ENCODE measurements at regions of chrX and their contacts with region 1.

Region 1: GRCh38 chrX:41759817-41760216 is 35.8 kb downstream of the GPR82 start:
- DNase-seq: no peak
- H3K4me3 ChIP-seq: no peak overlapping the region
- H3K27ac ChIP-seq: no peak overlapping the region
- H3K4me1 ChIP-seq: no peaks in the 10 kb centered on the region
- H3K27me3 ChIP-seq: no peaks in the 10 kb centered on the region
- CTCF ChIP-seq: peak in 9 of 11 experiments; percentile 25 to 57 (median 48)
- POLR2A ChIP-seq: no peak

Region 2: GRCh38 chrX:41558531-41558930 is 201.3 kb before region 1 on chrX:
- intact Hi-C with region 1: loop called (anchors 10 kb)
- DNase-seq: no peak
- H3K4me3 ChIP-seq: no peak overlapping the region
- H3K27ac ChIP-seq: peak overlapping the region in 1 of 8 donors; percentile 68
- H3K4me1 ChIP-seq: peaks cover 0 to 51% (median 24%) of the 10 kb centered on the region in 6 donors
- H3K27me3 ChIP-seq: no peaks in the 10 kb centered on the region
- CTCF ChIP-seq: peak in 6 of 11 experiments; percentile 21 to 38 (median 23)
- POLR2A ChIP-seq: no peak